Adrenal gland (tissue), 19 donors: ENCODE measurements at regions of chr17 and their contacts with region 1.

Region 1: DNA sequence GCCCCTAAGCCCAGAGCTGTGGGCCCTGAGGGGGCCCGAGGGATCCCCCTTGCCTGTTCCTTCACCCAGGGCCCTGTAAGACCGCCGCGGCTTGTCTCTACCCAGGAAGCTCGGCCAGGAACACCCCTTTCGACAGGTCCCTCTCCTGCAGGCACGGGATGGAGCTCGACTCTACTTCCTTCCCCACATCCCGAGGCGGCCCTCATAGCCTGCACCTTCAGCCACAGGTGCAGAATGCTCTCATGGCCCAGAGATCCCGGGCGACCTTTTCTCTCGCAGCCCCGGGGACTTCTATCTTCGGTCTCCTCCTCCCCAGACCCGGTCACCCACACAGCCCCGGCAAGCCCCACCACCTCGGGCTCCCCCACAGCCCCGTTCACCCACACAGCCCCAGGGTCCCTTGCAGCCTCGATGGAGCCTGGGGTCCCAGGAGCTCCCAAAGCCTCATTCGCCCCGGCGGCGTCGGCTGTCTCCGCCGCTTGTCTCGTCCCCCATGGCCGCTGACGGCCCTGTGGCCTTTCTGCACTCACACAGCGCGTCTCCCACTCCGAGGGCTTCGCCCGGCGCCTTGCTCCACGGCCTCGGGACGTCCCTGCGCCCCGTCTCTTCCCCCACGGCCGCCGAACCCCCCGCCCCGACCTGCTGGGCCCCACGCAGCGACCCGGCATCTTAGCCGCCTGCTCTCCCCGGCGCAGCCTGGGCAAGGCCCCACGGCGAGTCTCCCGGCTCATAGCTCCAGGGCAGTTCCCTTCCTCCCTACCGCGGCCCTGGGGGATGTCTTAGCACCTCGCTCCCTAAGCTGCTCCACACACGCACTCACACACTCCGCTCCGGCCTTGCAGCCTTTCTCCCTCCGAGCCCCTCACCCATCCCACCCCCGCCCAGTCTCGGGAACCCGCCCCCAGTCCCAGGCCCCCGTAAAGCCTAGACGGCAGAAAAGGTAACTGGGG is 650 bp downstream of the KIAA0753 start:
- DNase-seq: peak in 6 of 7 donors; percentile 35 to 56 (median 48)
- H3K4me3 ChIP-seq: peak overlapping the region; percentile 60 to 91 (median 86)
- H3K27ac ChIP-seq: peak overlapping the region; percentile 71 to 95 (median 78)
- H3K4me1 ChIP-seq: peaks cover 13 to 23% of the 10 kb centered on the region in 2 donors
- H3K27me3 ChIP-seq: no peaks in the 10 kb centered on the region
- CTCF ChIP-seq: no peak
- POLR2A ChIP-seq: no peak

Region 2: GRCh38 chr17:6479622-6480302 is 160.1 kb before region 1 on chr17:
- intact Hi-C with region 1: loop called (anchors 5 to 10 kb)
- DNase-seq: no peak
- H3K4me3 ChIP-seq: no peak overlapping the region
- H3K27ac ChIP-seq: no peak overlapping the region
- H3K4me1 ChIP-seq: peaks cover 0 to 7% of the 10 kb centered on the region in 2 donors
- H3K27me3 ChIP-seq: no peaks in the 10 kb centered on the region
- CTCF ChIP-seq: no peak
- POLR2A ChIP-seq: no peak

Region 3: GRCh38 chr17:6701719-6702118 is 61.9 kb after region 1 on chr17:
- intact Hi-C with region 1: no loop called
- DNase-seq: peak in 3 of 7 donors; percentile 20 to 41 (median 20)
- H3K4me3 ChIP-seq: no peak overlapping the region
- H3K27ac ChIP-seq: no peak overlapping the region
- H3K4me1 ChIP-seq: no peaks in the 10 kb centered on the region
- H3K27me3 ChIP-seq: no peaks in the 10 kb centered on the region
- CTCF ChIP-seq: peak in 1 of 6 experiments; percentile 23
- POLR2A ChIP-seq: no peak

Region 4: DNA sequence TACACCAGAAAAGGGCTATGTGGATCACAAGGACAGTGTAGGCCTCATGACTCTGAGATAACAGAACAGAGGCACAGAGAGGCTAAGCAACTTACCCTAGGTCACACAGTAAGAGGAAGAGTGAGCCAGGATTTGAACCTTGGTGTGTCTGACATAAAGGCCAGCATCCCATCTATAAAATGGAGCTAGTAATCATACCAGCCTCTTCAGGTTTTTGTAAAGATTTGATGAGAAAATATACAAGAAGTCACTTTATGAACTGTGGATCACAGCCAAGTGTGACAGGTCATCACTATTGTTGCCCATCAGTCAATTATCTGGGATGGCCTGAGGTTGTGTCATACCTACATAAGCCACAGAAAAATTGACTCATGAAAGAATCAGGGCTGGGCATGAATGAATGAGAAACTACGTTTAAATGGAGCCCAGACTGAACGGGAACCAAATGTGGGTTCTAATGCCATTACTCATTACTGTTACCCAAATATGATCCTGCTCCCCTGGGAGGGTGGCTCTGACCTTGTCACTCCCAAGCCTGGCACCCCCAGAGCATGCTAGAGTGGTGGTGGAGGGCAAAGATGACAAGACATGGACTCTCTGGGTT is 157.1 kb after region 1 on chr17:
- intact Hi-C with region 1: no loop called
- DNase-seq: no peak
- H3K4me3 ChIP-seq: no peak overlapping the region
- H3K27ac ChIP-seq: no peak overlapping the region
- H3K4me1 ChIP-seq: no peaks in the 10 kb centered on the region
- H3K27me3 ChIP-seq: no peaks in the 10 kb centered on the region
- CTCF ChIP-seq: no peak
- POLR2A ChIP-seq: no peak

Region 5: GRCh38 chr17:6823011-6823442 is 183.2 kb after region 1 on chr17:
- intact Hi-C with region 1: no loop called
- DNase-seq: no peak
- H3K4me3 ChIP-seq: no peak overlapping the region
- H3K27ac ChIP-seq: no peak overlapping the region
- H3K4me1 ChIP-seq: no peaks in the 10 kb centered on the region
- H3K27me3 ChIP-seq: no peaks in the 10 kb centered on the region
- CTCF ChIP-seq: no peak
- POLR2A ChIP-seq: no peak